B cell (primary cell): ENCODE measurements at regions of chr19 and their contacts with region 1.

Region 1: GRCh38 chr19:12867120-12868099 is 13.8 kb downstream of the DNASE2 start:
- DNase-seq: peak; percentile 91
- ATAC-seq: peak; percentile 89
- H3K4me3 ChIP-seq: peak overlapping the region; percentile 21 to 70 (median 63)
- H3K4me3 Mint-ChIP-seq: peak overlapping the region; percentile 91
- H3K27ac ChIP-seq: peak overlapping the region in 1 of 2 donors; percentile 20
- H3K27ac Mint-ChIP-seq: peak overlapping the region; percentile 77
- H3K4me1 ChIP-seq: peaks cover 0 to 11% of the 10 kb centered on the region in 2 donors
- H3K4me1 Mint-ChIP-seq: peaks cover 8% of the 10 kb centered on the region
- H3K27me3 ChIP-seq: peaks cover 0 to 2% (median 0%) of the 10 kb centered on the region in 4 experiments
- H3K27me3 Mint-ChIP-seq: peaks cover 6% of the 10 kb centered on the region
- CTCF ChIP-seq: no peak

Region 2: DNA sequence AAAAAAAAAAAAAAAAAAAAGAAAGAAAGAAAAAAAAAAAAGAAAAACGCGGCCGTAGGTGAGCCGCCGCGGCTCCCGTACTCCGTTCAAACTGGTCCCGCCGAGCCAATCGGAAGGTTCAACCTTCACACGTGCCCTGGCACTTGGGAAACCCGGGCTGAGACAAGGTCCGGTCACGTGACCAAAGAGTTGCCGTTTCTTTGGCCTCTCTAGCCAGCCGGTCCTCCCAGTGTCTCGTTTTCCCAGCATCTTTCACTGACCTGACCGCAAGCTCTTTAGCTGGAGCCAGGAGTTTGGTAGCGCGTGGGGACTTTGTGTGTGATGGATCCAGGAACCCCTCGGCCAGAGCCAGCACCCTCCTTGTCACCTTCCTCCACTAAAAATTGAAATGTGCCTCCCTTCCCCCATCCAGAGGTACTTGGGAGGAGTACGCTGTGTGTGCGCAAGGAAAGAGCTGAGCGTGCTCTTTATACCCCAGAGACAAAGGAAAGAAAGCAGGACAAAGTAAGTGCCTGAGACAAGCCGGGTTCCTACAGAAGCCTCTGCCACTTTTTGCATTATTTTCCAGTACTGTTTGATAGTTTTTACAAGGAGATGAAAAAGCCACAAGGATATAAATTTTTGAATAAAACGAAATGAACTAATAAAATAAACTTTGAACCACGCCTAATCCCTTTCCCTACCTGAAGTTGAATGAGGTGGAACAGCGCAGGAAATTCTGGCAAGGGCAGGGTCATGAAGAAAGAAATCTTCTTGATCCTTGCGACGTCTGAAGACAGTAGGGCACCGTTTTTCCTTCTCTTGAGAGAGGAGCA is 144.6 kb before region 1 on chr19:
- CTCF ChIA-PET with region 1: no interaction called
- POLR2A ChIA-PET with region 1: no interaction called
- intact Hi-C with region 1: no loop called
- DNase-seq: peak; percentile 97
- ATAC-seq: peak; percentile 87
- H3K4me3 ChIP-seq: peak overlapping the region; percentile 60 to 83 (median 77)
- H3K4me3 Mint-ChIP-seq: peak overlapping the region; percentile 95
- H3K27ac ChIP-seq: peak overlapping the region; percentile 17 to 69
- H3K27ac Mint-ChIP-seq: peak overlapping the region; percentile 97
- H3K4me1 ChIP-seq: peaks cover 29 to 39% of the 10 kb centered on the region in 2 donors
- H3K4me1 Mint-ChIP-seq: peaks cover 39% of the 10 kb centered on the region
- H3K27me3 ChIP-seq: no peaks in the 10 kb centered on the region
- H3K27me3 Mint-ChIP-seq: no peaks in the 10 kb centered on the region
- CTCF ChIP-seq: no peak

Region 3: GRCh38 chr19:12881172-12881808 is 13.9 kb after region 1 on chr19 and contains the start of gene DNASE2:
- CTCF ChIA-PET with region 1: interaction called, 3 read pairs
- POLR2A ChIA-PET with region 1: interaction called, 3 read pairs
- intact Hi-C with region 1: loop called (anchors 2 kb)
- DNase-seq: peak; percentile 98
- ATAC-seq: peak; percentile 88
- H3K4me3 ChIP-seq: peak within 1 kb of the TSS; percentile 58 to 97 (median 83)
- H3K4me3 Mint-ChIP-seq: peak within 1 kb of the TSS; percentile 84
- H3K27ac ChIP-seq: peak within 1 kb of the TSS; percentile 94 to 98
- H3K27ac Mint-ChIP-seq: peak within 1 kb of the TSS; percentile 96
- H3K4me1 ChIP-seq: peaks cover 19 to 41% of the 10 kb centered on the region in 2 donors
- H3K4me1 Mint-ChIP-seq: peaks cover 27% of the 10 kb centered on the region
- H3K27me3 ChIP-seq: no peaks in the 10 kb centered on the region
- H3K27me3 Mint-ChIP-seq: no peaks in the 10 kb centered on the region
- CTCF ChIP-seq: no peak
- total RNA-seq, gene DNASE2: 26.6 and 30.8 TPM in 2 replicates